Endothelial cell of umbilical vein (primary cell): ENCODE measurements at regions of chr5 and their contacts with region 1.

Region 1: DNA sequence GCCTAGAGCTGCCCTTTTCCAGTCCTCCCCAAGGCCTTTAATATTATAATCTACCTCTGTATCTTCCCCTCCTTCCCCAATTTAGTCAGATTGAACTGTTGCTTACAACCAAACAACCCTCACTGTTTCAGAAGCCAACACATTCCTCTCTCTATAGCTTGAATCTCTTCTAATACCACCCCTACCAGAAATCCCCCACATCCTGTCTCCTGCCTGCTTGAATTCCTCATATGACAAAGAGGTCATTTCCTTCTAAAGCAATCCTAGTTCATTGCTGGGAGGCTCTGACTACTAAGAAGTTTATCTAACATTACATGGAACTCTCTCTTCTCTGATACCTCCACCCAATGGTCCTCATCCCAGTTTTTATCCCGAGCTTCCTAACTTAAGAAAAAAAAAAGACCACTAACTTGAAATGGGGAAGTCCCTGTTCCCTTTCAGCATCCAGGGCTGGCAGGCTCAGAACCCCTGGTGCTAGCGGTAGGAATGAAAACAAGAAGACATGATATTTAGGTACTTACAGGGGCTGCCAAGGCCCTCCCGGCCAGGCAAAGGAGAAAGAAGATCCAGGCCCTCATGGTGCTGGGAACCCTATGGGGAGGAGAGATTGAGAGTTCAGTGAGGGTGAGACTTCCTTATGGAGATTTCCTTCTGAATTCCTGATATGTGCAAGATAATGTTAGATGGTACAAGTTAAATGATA is 11.0 kb downstream of the SPARC start:
- DNase-seq: peak; percentile 87
- H3K4me3 ChIP-seq: peak overlapping the region in 1 of 3 experiments; percentile 16
- H3K27ac ChIP-seq: peak overlapping the region; percentile 99
- H3K4me1 ChIP-seq: peaks cover 98% of the 10 kb centered on the region
- H3K27me3 ChIP-seq: no peaks in the 10 kb centered on the region
- CTCF ChIP-seq: no peak
- POLR2A ChIP-seq: no peak

Region 2: GRCh38 chr5:151699071-151699901 is 23.5 kb after region 1 on chr5:
- CTCF ChIA-PET with region 1: interaction called, 11 read pairs
- POLR2A ChIA-PET with region 1: interaction called, 14 read pairs
- dilution Hi-C with region 1: no loop called
- intact Hi-C with region 1: loop called (anchors 1 kb)
- DNase-seq: peak; percentile 94
- H3K4me3 ChIP-seq: no peak overlapping the region
- H3K27ac ChIP-seq: peak overlapping the region; percentile 93
- H3K4me1 ChIP-seq: peaks cover 12% of the 10 kb centered on the region
- H3K27me3 ChIP-seq: no peaks in the 10 kb centered on the region
- CTCF ChIP-seq: no peak
- POLR2A ChIP-seq: peak; percentile 62

Region 3: GRCh38 chr5:151719228-151720000 is 43.7 kb after region 1 on chr5:
- CTCF ChIA-PET with region 1: interaction called, 27 read pairs
- POLR2A ChIA-PET with region 1: no interaction called
- dilution Hi-C with region 1: no loop called
- intact Hi-C with region 1: loop called (anchors 1 kb)
- DNase-seq: peak; percentile 60
- H3K4me3 ChIP-seq: no peak overlapping the region
- H3K27ac ChIP-seq: no peak overlapping the region
- H3K4me1 ChIP-seq: no peaks in the 10 kb centered on the region
- H3K27me3 ChIP-seq: no peaks in the 10 kb centered on the region
- CTCF ChIP-seq: peak; percentile 52 to 67
- POLR2A ChIP-seq: no peak